Ascending aorta (tissue), 2 donors: ENCODE measurements at regions of chr1 and their contacts with region 1.

Region 1: GRCh38 chr1:27284425-27285273 is 37.3 kb upstream of the TMEM222 start:
- DNase-seq: peak; percentile 38 to 90
- H3K4me3 ChIP-seq: no peak overlapping the region
- H3K27ac ChIP-seq: no peak overlapping the region
- H3K4me1 ChIP-seq: no peaks in the 10 kb centered on the region
- H3K27me3 ChIP-seq: no peaks in the 10 kb centered on the region
- CTCF ChIP-seq: peak; percentile 52 to 83 (median 77)

Region 2: DNA sequence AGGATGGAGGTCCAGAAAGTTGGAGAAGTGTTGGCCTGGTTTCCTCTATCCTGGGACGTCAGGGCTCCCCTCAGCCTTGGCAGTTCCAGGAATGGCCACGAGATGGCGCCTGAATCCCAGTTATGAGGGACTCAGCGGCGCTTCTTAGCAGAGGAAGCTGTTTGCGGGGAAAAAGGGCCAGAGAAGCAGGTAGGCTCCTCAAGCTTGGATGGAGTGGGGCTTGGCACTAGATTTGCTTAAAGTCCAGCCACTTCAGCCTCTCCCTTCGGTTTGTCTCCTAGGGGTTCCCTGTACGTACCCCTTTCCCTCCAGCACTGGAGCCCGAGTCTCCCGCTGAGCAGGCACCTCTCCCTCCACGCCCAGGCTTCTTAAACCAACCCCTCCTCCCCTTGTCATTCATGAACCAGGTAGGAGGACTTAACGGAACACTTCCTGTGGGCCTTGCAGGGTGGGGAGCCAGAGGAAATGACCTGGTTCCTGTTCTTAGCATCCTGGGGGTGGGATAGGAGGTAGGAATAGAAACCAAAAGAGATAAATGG is 240.0 kb before region 1 on chr1:
- intact Hi-C with region 1: loop called (anchors 10 kb)
- DNase-seq: peak; percentile 43 to 94
- H3K4me3 ChIP-seq: peak overlapping the region; percentile 24 to 43
- H3K27ac ChIP-seq: no peak overlapping the region
- H3K4me1 ChIP-seq: peaks cover 5 to 7% of the 10 kb centered on the region in 2 donors
- H3K27me3 ChIP-seq: no peaks in the 10 kb centered on the region
- CTCF ChIP-seq: peak; percentile 94 to 98 (median 95)

Region 3: DNA sequence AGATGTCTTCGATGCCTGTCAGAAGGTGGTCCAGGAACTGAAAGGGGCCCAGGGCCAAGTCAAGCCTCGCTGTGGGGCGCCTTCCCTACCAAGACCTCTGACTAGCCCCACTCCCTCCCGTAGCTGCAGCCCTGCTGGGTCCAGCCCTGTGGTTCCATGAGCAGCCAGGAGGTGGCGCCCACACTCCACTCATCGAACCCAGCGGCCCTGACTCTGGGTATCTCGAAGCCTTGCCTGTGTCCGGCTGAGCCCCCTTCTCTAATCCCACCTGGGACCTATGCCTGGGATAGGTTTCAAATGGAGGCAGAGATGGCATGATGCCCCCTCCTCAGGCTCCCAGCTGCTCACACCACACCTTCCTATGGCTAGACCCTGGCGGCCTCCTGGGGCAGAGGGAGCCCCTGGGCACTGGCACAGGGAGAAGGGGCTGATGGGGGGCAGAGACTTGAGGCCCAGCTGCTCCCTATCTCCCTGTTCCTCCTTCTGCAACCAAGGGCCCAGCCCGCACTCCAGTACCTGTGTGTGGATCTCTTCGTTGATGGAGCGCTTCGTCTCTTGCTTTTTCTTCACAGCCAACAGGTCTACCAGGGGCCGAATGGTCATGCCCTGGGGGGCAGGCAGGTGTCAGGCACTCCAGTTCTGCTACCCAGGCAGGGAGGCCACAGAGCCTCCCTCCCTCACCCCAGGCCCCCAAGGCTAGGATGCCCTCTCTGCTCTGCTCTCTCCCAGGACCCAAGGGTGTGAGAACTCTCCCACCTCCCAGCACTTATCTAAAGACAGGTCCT is 181.8 kb before region 1 on chr1:
- intact Hi-C with region 1: loop called (anchors 1 kb)
- DNase-seq: peak in 1 of 2 donors; percentile 86
- H3K4me3 ChIP-seq: no peak overlapping the region
- H3K27ac ChIP-seq: no peak overlapping the region
- H3K4me1 ChIP-seq: peaks cover 16 to 22% of the 10 kb centered on the region in 2 donors
- H3K27me3 ChIP-seq: no peaks in the 10 kb centered on the region
- CTCF ChIP-seq: peak; percentile 97 to 99 (median 98)

Region 4: DNA sequence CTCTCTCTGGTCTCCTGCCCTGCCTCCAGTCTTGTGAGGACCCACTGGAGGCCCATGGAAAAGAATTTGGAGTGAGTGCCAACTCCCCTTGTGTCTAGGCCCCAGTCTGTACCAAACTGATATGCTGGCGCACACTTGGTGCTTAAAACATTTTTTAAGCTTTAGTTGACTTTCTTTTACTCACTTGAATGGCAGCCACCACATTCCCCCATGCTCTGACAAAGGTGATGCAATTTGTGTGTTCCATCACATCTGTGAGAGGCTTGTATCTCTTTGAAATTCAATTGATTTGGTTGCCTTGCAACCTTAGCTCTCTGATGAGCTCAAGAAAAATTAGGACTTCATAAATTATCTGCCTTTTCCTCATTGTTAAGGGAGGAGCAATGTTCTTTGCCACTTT is 80.7 kb before region 1 on chr1:
- intact Hi-C with region 1: loop called (anchors 2 kb)
- DNase-seq: no peak
- H3K4me3 ChIP-seq: no peak overlapping the region
- H3K27ac ChIP-seq: no peak overlapping the region
- H3K4me1 ChIP-seq: no peaks in the 10 kb centered on the region
- H3K27me3 ChIP-seq: no peaks in the 10 kb centered on the region
- CTCF ChIP-seq: no peak

Region 5: DNA sequence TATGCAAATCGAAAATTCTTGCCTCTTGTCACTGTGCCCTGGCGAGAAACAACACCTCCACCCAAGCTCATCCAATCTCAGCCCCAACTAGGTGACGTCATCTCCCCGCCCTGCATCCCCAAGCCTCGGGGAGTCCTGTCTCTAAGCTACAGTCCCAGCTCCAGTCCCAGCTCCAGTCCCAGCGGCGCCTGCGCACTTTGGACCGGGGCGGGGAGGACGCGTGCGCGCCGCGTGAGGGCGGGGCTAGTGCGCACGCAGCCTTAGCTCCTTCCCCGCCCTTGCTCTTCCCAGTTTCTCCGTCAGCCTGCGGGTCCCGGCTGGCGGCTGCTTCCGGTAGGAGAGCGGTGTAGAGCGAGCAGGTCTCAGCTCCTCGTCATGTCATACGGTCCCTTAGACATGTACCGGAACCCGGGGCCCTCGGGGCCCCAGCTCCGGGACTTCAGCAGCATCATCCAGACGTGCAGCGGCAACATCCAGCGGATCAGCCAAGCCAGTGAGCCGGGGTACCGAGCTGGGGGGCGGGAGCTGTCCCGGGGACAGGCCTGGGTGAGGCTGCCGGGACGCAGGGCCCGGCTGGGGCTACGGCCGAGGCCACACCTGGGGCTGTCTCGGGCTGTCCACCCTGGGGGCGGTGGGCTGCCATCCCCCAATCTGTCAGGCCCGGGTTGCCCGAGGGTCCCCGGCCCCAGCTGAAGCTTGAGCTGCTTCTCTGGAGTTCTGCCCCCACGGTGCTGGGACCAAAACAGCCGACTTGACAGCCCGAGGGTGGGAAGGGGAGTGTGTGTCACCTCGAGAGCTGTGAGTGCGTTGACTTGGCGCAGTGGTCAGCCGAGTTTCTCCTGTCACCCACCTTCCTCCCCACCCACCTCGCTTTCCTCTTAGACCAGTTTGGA is 488.5 kb after region 1 on chr1 and contains the start of gene STX12:
- intact Hi-C with region 1: no loop called
- DNase-seq: peak; percentile 99 to 100
- H3K4me3 ChIP-seq: peak within 1 kb of the TSS; percentile 75 to 91
- H3K27ac ChIP-seq: peak within 1 kb of the TSS; percentile 96 to 98
- H3K4me1 ChIP-seq: peaks cover 0 to 24% of the 10 kb centered on the region in 2 donors
- H3K27me3 ChIP-seq: no peaks in the 10 kb centered on the region
- CTCF ChIP-seq: no peak
- total RNA-seq, gene STX12: 91.9 TPM